ENCODE measurements at regions of chr18 and their contacts with region 1.

Region 1: GRCh38 chr18:22115573-22115972 is 53.8 kb upstream of the GATA6 start:
- DNase-seq: peak; percentile 23 to 49
- H3K4me3 ChIP-seq: no peak overlapping the region
- H3K4me3 Mint-ChIP-seq: peak overlapping the region; percentile 25
- H3K27ac Mint-ChIP-seq: peak overlapping the region; percentile 84
- H3K4me1 ChIP-seq: peaks cover 26% of the 10 kb centered on the region
- H3K4me1 Mint-ChIP-seq: peaks cover 39% of the 10 kb centered on the region
- H3K27me3 ChIP-seq: no peaks in the 10 kb centered on the region
- H3K27me3 Mint-ChIP-seq: no peaks in the 10 kb centered on the region
- CTCF ChIP-seq: no peak

Region 2: GRCh38 chr18:21704603-21705364 is 410.8 kb before region 1 on chr18 and contains the start of gene ABHD3:
- CTCF ChIA-PET with region 1: no interaction called
- POLR2A ChIA-PET with region 1: no interaction called
- intact Hi-C with region 1: no loop called
- DNase-seq: peak; percentile 94 to 96
- H3K4me3 ChIP-seq: peak within 1 kb of the TSS; percentile 84
- H3K4me3 Mint-ChIP-seq: peak within 1 kb of the TSS; percentile 86
- H3K27ac Mint-ChIP-seq: peak within 1 kb of the TSS; percentile 64
- H3K4me1 ChIP-seq: peaks cover 6% of the 10 kb centered on the region
- H3K4me1 Mint-ChIP-seq: peaks cover 6% of the 10 kb centered on the region
- H3K27me3 ChIP-seq: no peaks in the 10 kb centered on the region
- H3K27me3 Mint-ChIP-seq: no peaks in the 10 kb centered on the region
- CTCF ChIP-seq: peak; percentile 25 to 39
- total RNA-seq, gene ABHD3: 29.3 and 31.8 TPM in 2 replicates

Region 3: GRCh38 chr18:22128954-22129353 is 13.4 kb after region 1 on chr18:
- CTCF ChIA-PET with region 1: no interaction called
- POLR2A ChIA-PET with region 1: no interaction called
- intact Hi-C with region 1: loop called (anchors 2 kb)
- DNase-seq: no peak
- H3K4me3 ChIP-seq: no peak overlapping the region
- H3K4me3 Mint-ChIP-seq: no peak overlapping the region
- H3K27ac Mint-ChIP-seq: no peak overlapping the region
- H3K4me1 ChIP-seq: peaks cover 22% of the 10 kb centered on the region
- H3K4me1 Mint-ChIP-seq: peaks cover 34% of the 10 kb centered on the region
- H3K27me3 ChIP-seq: no peaks in the 10 kb centered on the region
- H3K27me3 Mint-ChIP-seq: no peaks in the 10 kb centered on the region
- CTCF ChIP-seq: no peak

Region 4: DNA sequence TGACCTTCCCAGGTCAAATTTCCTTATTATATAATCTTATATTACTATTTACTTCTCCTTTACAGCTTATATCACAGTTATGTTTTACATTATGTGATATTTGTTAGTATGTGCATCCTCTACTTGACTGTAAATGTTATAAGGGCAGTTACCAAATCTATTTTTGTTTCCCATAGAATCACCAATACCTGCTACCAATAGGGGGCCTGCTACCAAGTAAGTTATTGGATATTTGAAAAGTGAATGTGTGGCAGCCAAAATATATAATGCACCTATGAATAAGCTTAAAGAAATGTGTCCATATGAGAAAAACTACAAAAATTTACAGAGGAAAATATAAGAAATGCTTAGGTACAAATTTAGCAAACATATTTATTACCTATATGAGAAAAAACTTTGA is 326.1 kb after region 1 on chr18:
- CTCF ChIA-PET with region 1: no interaction called
- POLR2A ChIA-PET with region 1: no interaction called
- intact Hi-C with region 1: no loop called
- DNase-seq: no peak
- H3K4me3 ChIP-seq: no peak overlapping the region
- H3K4me3 Mint-ChIP-seq: no peak overlapping the region
- H3K27ac Mint-ChIP-seq: no peak overlapping the region
- H3K4me1 ChIP-seq: no peaks in the 10 kb centered on the region
- H3K4me1 Mint-ChIP-seq: no peaks in the 10 kb centered on the region
- H3K27me3 ChIP-seq: no peaks in the 10 kb centered on the region
- H3K27me3 Mint-ChIP-seq: no peaks in the 10 kb centered on the region
- CTCF ChIP-seq: no peak